Cardiac septum (tissue), 1 donor: ENCODE measurements at regions of chr6 and their contacts with region 1.

Region 1: GRCh38 chr6:37860226-37860839 is 40.8 kb downstream of the ZFAND3 start:
- DNase-seq: no peak

Region 2: DNA sequence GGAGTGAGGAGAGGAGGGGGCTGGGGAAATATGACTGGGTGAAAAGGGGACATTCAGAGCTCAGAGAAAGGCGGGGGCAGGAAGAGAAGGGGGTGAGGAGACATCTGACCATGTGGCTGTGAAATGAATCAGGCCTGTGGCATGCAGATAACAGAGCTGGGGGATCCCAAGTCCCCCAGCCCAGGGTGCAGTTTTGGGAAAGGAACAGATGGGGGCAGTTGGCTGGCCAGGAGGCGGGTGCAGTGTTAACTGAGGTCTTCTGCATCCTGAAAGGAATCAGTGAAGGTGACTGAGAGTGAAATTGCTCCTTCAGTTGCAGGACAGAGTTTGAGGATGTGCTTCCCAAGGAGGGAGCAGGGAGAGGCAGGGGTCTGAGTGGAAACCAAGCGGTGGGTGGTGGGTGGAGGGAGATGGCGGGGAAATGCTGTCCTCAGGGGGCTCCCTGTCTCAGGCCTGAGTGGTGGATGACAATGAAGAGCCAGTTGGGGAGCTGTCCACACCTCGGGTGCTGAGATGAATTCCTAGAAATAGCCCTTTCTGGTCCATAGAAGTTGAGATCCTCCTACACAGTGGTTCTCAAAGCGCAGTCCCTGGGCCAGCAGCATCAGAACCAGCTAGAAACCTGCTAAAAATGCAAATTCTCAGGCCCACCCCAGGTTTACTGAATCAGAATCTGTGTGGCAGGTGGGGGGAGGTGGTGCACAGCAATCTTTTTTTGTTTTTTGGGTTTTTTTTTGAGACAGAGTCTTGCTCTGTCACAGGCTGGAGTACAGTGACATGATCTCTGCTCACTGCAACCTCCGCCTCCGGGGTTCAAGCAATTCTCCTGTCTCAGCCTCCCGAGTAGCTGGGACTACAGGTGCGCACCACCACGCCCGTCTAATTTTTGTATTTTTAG is 334.6 kb before region 1 on chr6:
- intact Hi-C with region 1: no loop called
- DNase-seq: no peak

Region 3: DNA sequence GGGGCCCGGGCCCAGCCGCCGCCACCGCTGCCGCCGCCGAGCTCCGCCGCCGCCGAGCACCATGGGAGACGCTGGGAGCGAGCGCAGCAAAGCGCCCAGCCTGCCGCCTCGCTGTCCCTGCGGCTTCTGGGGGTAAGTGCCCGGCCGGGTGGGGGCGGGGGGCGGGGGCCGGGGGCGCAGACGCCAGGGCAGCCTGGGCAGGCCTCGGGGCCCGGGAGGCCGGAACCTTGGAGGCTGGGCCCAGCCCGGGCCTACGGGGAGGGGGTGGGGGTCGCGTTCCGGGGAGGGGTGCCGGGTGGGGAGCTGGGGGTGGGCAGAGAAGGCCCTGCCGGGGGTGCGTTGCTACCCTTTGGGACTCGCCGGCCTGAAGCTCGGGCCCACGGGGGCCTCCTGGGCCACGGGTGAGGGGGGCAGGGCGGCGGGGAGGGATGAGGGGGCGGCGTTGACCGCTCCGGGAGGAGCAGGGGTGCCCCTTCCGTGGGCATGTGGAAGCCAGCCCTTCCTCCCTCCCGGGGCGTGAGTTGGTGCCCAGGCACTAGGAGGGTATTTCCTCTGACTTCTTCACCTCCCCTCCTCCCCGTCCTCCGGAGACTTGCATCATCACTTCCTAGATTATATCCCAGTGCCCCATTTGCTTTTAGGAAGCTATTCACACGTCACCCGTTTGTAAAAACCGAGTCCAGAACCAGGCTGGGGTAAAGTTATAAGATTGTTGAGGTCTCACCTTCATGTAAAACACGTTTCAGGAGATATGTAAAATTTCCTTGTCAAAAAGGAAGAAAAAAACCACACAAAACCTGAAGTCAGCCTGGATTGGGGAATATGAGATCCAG is 40.2 kb before region 1 on chr6:
- intact Hi-C with region 1: loop called (anchors 5 kb)
- DNase-seq: peak; percentile 83